Left ventricle myocardium inferior (tissue), 1 donor: ENCODE measurements at regions of chr12 and their contacts with region 1.

Region 1: GRCh38 chr12:39103552-39104165 is 198.3 kb upstream of the CPNE8 start:
- DNase-seq: no peak
- H3K4me3 ChIP-seq: no peak overlapping the region
- H3K27ac ChIP-seq: no peak overlapping the region
- H3K4me1 ChIP-seq: no peaks in the 10 kb centered on the region
- H3K27me3 ChIP-seq: no peaks in the 10 kb centered on the region
- CTCF ChIP-seq: peak; percentile 89

Region 2: DNA sequence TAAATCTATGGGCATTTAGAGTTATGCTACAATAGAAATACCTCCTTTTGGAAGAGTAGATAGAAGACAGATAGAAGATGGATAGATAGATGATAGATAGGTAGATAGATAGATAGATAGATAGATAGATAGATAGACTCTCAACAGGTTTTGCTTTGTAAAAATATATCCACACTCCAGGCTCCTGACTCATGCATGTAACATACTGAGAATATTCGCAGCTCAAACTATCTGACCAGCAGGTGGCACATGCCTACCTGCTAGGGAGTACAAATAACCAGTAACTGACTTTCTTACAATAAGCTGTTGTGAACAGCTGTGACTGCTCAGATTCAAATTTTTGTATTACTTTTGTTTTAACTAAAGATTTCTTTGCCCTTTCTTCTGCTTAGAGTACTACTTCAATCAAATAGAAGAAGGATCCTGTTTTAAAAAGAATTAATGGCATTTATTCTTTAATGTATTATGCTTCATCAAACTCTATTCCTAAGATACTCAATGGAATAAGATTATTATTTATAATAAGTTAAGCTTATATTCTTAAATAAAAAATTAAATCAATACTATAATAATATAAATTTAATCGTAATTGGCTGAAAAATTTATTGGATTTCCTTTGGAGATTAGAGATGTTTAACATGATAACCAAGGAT is 182.5 kb before region 1 on chr12:
- intact Hi-C with region 1: loop called (anchors 5 kb)
- DNase-seq: peak; percentile 22
- H3K4me3 ChIP-seq: no peak overlapping the region
- H3K27ac ChIP-seq: no peak overlapping the region
- H3K4me1 ChIP-seq: no peaks in the 10 kb centered on the region
- H3K27me3 ChIP-seq: no peaks in the 10 kb centered on the region
- CTCF ChIP-seq: peak; percentile 72

Region 3: GRCh38 chr12:39145175-39145999 is 41.7 kb after region 1 on chr12:
- intact Hi-C with region 1: no loop called
- DNase-seq: peak; percentile 37
- H3K4me3 ChIP-seq: peak overlapping the region; percentile 71
- H3K27ac ChIP-seq: no peak overlapping the region
- H3K4me1 ChIP-seq: peaks cover 13% of the 10 kb centered on the region
- H3K27me3 ChIP-seq: peaks cover 42% of the 10 kb centered on the region
- CTCF ChIP-seq: peak; percentile 79

Region 4: GRCh38 chr12:39372929-39373328 is 269.3 kb after region 1 on chr12:
- intact Hi-C with region 1: no loop called
- DNase-seq: no peak
- H3K4me3 ChIP-seq: no peak overlapping the region
- H3K27ac ChIP-seq: no peak overlapping the region
- H3K4me1 ChIP-seq: peaks cover 12% of the 10 kb centered on the region
- H3K27me3 ChIP-seq: no peaks in the 10 kb centered on the region
- CTCF ChIP-seq: no peak